Psoas muscle (tissue), 8 donors: ENCODE measurements at regions of chr6 and their contacts with region 1.

Region 1: GRCh38 chr6:20534295-20535262 is at the start of gene CDKAL1:
- DNase-seq: peak; percentile 90 to 93
- ATAC-seq: peak; percentile 90 to 98 (median 96)
- H3K4me3 ChIP-seq: peak within 1 kb of the TSS; percentile 93
- H3K27ac ChIP-seq: peak within 1 kb of the TSS; percentile 86
- H3K4me1 ChIP-seq: peaks cover 13% of the 10 kb centered on the region
- H3K27me3 ChIP-seq: no peaks in the 10 kb centered on the region
- CTCF ChIP-seq: no peak
- total RNA-seq, gene CDKAL1: 12.9 to 16.1 (median 15.0) TPM

Region 2: DNA sequence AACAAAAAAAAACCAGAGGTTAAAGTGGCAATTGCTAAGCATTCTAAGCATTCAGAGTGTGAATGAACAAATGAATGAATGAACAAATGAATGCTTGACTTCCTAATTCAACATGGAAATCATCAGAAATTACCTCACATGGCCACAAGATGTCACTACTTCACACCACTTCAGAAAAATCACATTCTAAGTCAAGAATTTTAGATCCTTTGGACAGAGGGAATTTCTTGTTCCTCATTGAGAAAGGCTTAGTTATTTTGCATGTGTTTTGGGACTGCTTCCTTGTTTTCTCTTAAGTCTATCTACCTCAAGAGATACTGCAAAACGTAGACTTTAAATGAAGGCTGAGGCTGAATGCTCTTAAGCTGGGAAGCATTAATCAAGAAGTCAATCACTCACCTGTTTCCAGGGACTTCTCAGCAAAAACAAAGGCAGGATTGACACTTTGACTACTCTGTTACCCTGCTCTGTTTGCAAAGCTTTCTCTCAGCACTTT is 442.5 kb before region 1 on chr6:
- intact Hi-C with region 1: loop called in 1 of 2 experiments (anchors 10 kb)
- DNase-seq: no peak
- ATAC-seq: peak in 2 of 4 donors; percentile 37 to 72
- H3K4me3 ChIP-seq: no peak overlapping the region
- H3K27ac ChIP-seq: no peak overlapping the region
- H3K4me1 ChIP-seq: no peaks in the 10 kb centered on the region
- H3K27me3 ChIP-seq: no peaks in the 10 kb centered on the region
- CTCF ChIP-seq: peak; percentile 66

Region 3: GRCh38 chr6:20291764-20292580 is 242.6 kb before region 1 on chr6:
- intact Hi-C with region 1: loop called (anchors 2 kb)
- DNase-seq: peak; percentile 55 to 59
- ATAC-seq: peak; percentile 87 to 95 (median 90)
- H3K4me3 ChIP-seq: no peak overlapping the region
- H3K27ac ChIP-seq: no peak overlapping the region
- H3K4me1 ChIP-seq: no peaks in the 10 kb centered on the region
- H3K27me3 ChIP-seq: no peaks in the 10 kb centered on the region
- CTCF ChIP-seq: peak; percentile 96

Region 4: GRCh38 chr6:20401205-20402091 is 133.1 kb before region 1 on chr6 and contains the start of gene E2F3:
- intact Hi-C with region 1: loop called (anchors 5 kb)
- DNase-seq: peak; percentile 100
- ATAC-seq: peak; percentile 91 to 94 (median 92)
- H3K4me3 ChIP-seq: peak within 1 kb of the TSS; percentile 84
- H3K27ac ChIP-seq: peak within 1 kb of the TSS; percentile 93
- H3K4me1 ChIP-seq: peaks cover 9% of the 10 kb centered on the region
- H3K27me3 ChIP-seq: no peaks in the 10 kb centered on the region
- CTCF ChIP-seq: no peak
- total RNA-seq, gene E2F3: 8.8 to 16.8 (median 15.9) TPM